ENCODE measurements at regions of chr7 and their contacts with region 1.

Region 1: GRCh38 chr7:99040104-99040958 is 103.6 kb downstream of the SMURF1 start:
- DNase-seq: peak; percentile 74
- ATAC-seq: peak; percentile 85

Region 2: GRCh38 chr7:99143853-99144672 is 103.7 kb after region 1 on chr7 and contains the start of gene SMURF1:
- intact Hi-C with region 1: loop called (anchors 10 kb)
- DNase-seq: peak; percentile 87
- ATAC-seq: peak; percentile 77
- total RNA-seq, gene SMURF1: 11.5 TPM

Region 3: GRCh38 chr7:99190359-99191032 is 150.2 kb after region 1 on chr7:
- intact Hi-C with region 1: no loop called
- DNase-seq: no peak
- ATAC-seq: no peak

Region 4: GRCh38 chr7:99312316-99313203 is 272.2 kb after region 1 on chr7:
- intact Hi-C with region 1: loop called (anchors 2 kb)
- DNase-seq: peak; percentile 74
- ATAC-seq: peak; percentile 75